CD4-positive, alpha-beta memory T cell (primary cell): ENCODE measurements at regions of chr20 and their contacts with region 1.

Region 1: DNA sequence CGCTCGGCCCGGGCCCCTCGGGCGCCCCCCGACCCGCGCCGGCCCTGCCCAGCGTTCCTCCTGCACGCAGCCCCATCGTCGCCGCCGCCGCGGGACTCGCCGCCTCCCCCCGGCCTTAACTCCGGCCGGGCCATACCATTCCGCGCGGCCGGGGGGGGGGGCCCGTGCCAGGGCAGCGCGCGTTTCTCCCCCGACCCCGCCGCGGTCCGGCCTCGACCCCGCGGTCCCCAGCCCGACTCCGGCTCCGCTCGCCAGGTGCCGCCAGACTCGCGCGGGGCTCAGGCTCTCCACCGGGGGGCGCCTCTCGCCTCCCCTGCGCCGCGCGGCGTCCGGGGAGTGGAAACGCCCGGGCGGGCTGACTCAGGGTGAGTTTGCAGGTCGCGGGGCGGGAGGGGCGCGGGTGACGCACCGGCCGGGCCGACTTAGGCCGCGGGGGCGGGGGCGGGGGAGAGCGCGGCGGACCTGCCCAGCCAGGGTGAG is at the start of gene SRXN1:
- DNase-seq: peak; percentile 61 to 79 (median 65)
- H3K4me3 ChIP-seq: peak within 1 kb of the TSS; percentile 17 to 57
- H3K4me3 Mint-ChIP-seq: peak within 1 kb of the TSS; percentile 85 to 90 (median 88)
- H3K27ac ChIP-seq: peak within 1 kb of the TSS; percentile 50
- H3K27ac Mint-ChIP-seq: peak within 1 kb of the TSS; percentile 65 to 92 (median 88)
- H3K4me1 ChIP-seq: peaks cover 28% of the 10 kb centered on the region
- H3K4me1 Mint-ChIP-seq: peaks cover 22 to 45% (median 33%) of the 10 kb centered on the region in 4 donors
- H3K27me3 ChIP-seq: no peaks in the 10 kb centered on the region
- H3K27me3 Mint-ChIP-seq: peaks cover 4% of the 10 kb centered on the region in 2 donors
- total RNA-seq, gene SRXN1: 6.9 to 7.4 TPM

Region 2: GRCh38 chr20:667391-667964 is 14.3 kb after region 1 on chr20:
- CTCF ChIA-PET with region 1: interaction called, 6 read pairs
- POLR2A ChIA-PET with region 1: no interaction called
- intact Hi-C with region 1: loop called (anchors 2 kb)
- DNase-seq: peak; percentile 20 to 48 (median 36)
- H3K4me3 ChIP-seq: no peak overlapping the region
- H3K4me3 Mint-ChIP-seq: no peak overlapping the region
- H3K27ac ChIP-seq: no peak overlapping the region
- H3K27ac Mint-ChIP-seq: no peak overlapping the region
- H3K4me1 ChIP-seq: no peaks in the 10 kb centered on the region
- H3K4me1 Mint-ChIP-seq: peaks cover 1 to 12% (median 7%) of the 10 kb centered on the region in 4 donors
- H3K27me3 ChIP-seq: peaks cover 8% of the 10 kb centered on the region
- H3K27me3 Mint-ChIP-seq: peaks cover 49 to 61% of the 10 kb centered on the region in 2 donors